ENCODE measurements at regions of chr4 and their contacts with region 1.

Region 1: GRCh38 chr4:159476886-159477285 is 374.0 kb downstream of the RAPGEF2 start:
- DNase-seq: no peak
- H3K4me3 ChIP-seq: no peak overlapping the region
- H3K27ac ChIP-seq: no peak overlapping the region
- H3K4me1 ChIP-seq: no peaks in the 10 kb centered on the region
- H3K27me3 ChIP-seq: no peaks in the 10 kb centered on the region
- CTCF ChIP-seq: no peak
- EP300 ChIP-seq: no peak
- POLR2A ChIP-seq: no peak

Region 2: DNA sequence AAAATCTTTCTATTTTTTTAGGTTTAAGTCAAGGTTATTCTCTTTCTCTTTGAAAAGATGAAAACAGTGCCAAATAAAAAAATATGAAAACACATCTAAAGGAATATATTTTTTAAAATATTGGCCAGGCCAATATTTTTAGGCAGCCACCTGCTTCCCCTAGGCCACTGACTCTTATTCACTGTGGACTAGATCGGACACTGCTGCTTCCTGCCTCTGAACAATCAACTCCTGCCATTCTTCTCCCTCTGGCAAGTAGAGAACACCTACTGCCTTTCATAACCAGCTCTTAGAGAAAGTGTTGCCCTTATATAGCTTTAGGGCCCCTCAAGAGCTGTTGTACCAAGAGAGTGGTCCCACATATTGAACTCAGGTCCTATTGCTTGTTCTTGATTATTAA is 155.1 kb after region 1 on chr4:
- intact Hi-C with region 1: no loop called
- DNase-seq: no peak
- H3K4me3 ChIP-seq: no peak overlapping the region
- H3K27ac ChIP-seq: no peak overlapping the region
- H3K4me1 ChIP-seq: no peaks in the 10 kb centered on the region
- H3K27me3 ChIP-seq: no peaks in the 10 kb centered on the region
- CTCF ChIP-seq: no peak
- EP300 ChIP-seq: no peak
- POLR2A ChIP-seq: no peak

Region 3: DNA sequence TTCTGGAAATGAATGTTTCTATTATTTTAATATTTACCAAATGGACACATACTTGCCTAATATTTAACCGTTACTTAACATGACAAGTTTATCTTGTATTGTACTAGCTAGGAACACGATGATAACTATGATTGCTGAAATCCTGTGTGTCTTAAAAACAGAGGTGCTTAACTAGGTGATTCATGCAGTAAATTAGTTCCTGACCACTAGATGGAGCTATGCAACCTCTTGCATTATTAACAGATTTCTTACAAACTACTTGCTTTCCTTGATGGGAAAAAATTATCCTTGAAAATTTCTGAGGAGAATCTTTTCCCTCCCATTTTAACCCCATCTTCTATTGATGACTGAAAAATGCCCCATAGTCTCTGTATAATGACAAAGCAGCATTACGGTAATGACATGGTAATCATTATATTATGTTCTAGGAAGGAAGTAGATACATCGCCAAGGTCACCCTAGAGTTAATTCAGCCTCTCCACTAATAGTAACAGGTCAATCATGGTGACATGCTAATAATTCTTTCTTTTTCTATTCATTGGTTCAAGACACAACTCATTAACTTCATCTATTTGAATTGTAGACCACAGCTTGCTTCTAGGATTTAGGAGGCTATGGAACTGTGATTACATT is 470.2 kb after region 1 on chr4:
- intact Hi-C with region 1: loop called in 1 of 4 experiments (anchors 5 kb)
- DNase-seq: no peak
- H3K4me3 ChIP-seq: no peak overlapping the region
- H3K27ac ChIP-seq: no peak overlapping the region
- H3K4me1 ChIP-seq: no peaks in the 10 kb centered on the region
- H3K27me3 ChIP-seq: no peaks in the 10 kb centered on the region
- CTCF ChIP-seq: no peak
- EP300 ChIP-seq: no peak
- POLR2A ChIP-seq: no peak